HepG2 (cell line): ENCODE measurements at regions of chr19 and their contacts with region 1.

Region 1: DNA sequence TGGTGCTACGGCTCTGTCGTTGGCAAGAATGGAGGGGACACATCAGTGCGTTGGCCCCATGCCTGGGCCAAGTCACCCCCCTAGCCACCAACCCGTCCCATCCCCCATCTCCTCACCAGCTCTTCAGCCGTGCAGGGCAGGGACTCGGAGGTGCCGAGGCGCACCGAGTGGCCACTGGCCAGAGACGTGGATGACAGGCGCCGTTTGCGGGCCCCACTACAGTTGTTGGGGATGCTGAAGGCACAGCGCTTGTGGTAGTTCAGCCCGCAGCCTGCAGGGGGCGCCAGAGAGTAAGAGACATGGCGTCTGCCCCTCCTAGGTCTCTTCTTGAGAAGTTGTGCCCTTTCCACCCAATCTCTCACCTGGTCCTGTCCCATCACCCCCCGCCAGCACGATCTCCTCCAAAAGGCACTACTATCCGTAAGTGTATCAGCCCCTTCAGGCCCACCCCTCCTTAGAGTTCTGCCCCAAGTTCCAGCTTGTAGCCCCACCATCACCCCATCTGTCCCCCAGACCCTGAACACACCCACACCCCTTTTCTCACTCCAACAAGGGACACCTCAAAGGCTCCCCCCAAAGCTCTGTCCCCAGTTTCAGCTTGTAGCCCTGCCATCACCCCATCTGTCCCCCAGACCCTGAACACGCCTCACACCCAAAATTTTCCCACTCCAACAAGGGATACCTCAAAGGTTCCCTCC is 12.4 kb downstream of the PRKD2 start:
- DNase-seq: peak; percentile 29
- ATAC-seq: peak; percentile 89
- H3K4me3 ChIP-seq: no peak overlapping the region
- H3K27ac ChIP-seq: no peak overlapping the region
- H3K4me1 ChIP-seq: no peaks in the 10 kb centered on the region
- H3K27me3 ChIP-seq: no peaks in the 10 kb centered on the region
- CTCF ChIP-seq: peak; percentile 88
- EP300 ChIP-seq: no peak
- POLR2A ChIP-seq: no peak
- RAD21 ChIP-seq: peak; percentile 58

Region 2: GRCh38 chr19:46728693-46729676 is 24.5 kb after region 1 on chr19:
- CTCF ChIA-PET with region 1: interaction called, 22 read pairs
- POLR2A ChIA-PET with region 1: no interaction called
- in situ Hi-C with region 1: no loop called
- intact Hi-C with region 1: loop called (anchors 1 kb)
- DNase-seq: peak; percentile 27
- ATAC-seq: peak; percentile 88
- H3K4me3 ChIP-seq: no peak overlapping the region
- H3K27ac ChIP-seq: no peak overlapping the region
- H3K4me1 ChIP-seq: no peaks in the 10 kb centered on the region
- H3K27me3 ChIP-seq: no peaks in the 10 kb centered on the region
- CTCF ChIP-seq: peak; percentile 94
- EP300 ChIP-seq: no peak
- POLR2A ChIP-seq: no peak
- RAD21 ChIP-seq: peak; percentile 86